ENCODE measurements at regions of chr18 and their contacts with region 1.

Region 1: GRCh38 chr18:57803103-57803969 is at the start of gene ATP8B1:
- DNase-seq: peak; percentile 84 to 87 (median 86)
- ATAC-seq: peak; percentile 88 to 95 (median 91)
- H3K4me3 ChIP-seq: peak within 1 kb of the TSS; percentile 78 to 97 (median 90)
- H3K27ac ChIP-seq: peak within 1 kb of the TSS; percentile 70 to 97 (median 92)
- H3K4me1 ChIP-seq: peaks cover 0 to 65% (median 26%) of the 10 kb centered on the region in 12 donors
- H3K27me3 ChIP-seq: peaks cover 0 to 46% (median 0%) of the 10 kb centered on the region in 9 donors
- CTCF ChIP-seq: no peak
- POLR2A ChIP-seq: peak in 1 of 2 donors; percentile 76
- total RNA-seq, gene ATP8B1: 5.3 to 12.8 (median 6.5) TPM

Region 2: DNA sequence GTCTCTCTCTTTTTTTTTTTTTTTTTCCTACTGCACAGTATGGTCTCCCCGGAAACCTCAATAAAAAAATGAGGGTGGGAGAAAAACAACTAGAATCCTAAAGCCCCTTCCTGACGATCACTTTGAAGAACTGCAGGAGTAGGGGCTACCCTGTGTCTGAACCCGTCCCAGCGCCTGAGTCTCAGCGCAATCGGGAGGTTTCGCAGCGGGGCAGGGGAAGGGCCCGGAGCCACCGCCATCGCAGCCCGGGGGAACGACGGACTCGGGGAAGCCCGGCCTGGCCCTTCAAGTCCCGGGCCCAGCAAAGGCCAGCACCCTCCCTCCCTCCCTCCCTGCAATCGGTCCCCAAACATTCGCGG is 182.1 kb before region 1 on chr18:
- intact Hi-C with region 1: loop called in 1 of 10 experiments (anchors 5 kb)
- DNase-seq: no peak
- ATAC-seq: peak; percentile 4 to 57 (median 49)
- H3K4me3 ChIP-seq: peak overlapping the region; percentile 60 to 93 (median 84)
- H3K27ac ChIP-seq: peak overlapping the region; percentile 58 to 96 (median 88)
- H3K4me1 ChIP-seq: peaks cover 0 to 38% (median 17%) of the 10 kb centered on the region in 12 donors
- H3K27me3 ChIP-seq: no peaks in the 10 kb centered on the region
- CTCF ChIP-seq: no peak
- POLR2A ChIP-seq: no peak

Region 3: GRCh38 chr18:57666818-57667497 is 136.4 kb before region 1 on chr18:
- intact Hi-C with region 1: loop called in 3 of 10 experiments (anchors 5 to 10 kb)
- DNase-seq: no peak
- ATAC-seq: peak in 2 of 4 donors; percentile 66 to 73
- H3K4me3 ChIP-seq: peak overlapping the region in 1 of 12 donors; percentile 13
- H3K27ac ChIP-seq: peak overlapping the region in 10 of 12 donors; percentile 23 to 74 (median 54)
- H3K4me1 ChIP-seq: peaks cover 0 to 41% (median 25%) of the 10 kb centered on the region in 12 donors
- H3K27me3 ChIP-seq: no peaks in the 10 kb centered on the region
- CTCF ChIP-seq: no peak
- POLR2A ChIP-seq: no peak

Region 4: GRCh38 chr18:57710226-57710625 is 93.1 kb before region 1 on chr18:
- intact Hi-C with region 1: loop called in 1 of 10 experiments (anchors 5 kb)
- DNase-seq: no peak
- ATAC-seq: no peak
- H3K4me3 ChIP-seq: no peak overlapping the region
- H3K27ac ChIP-seq: no peak overlapping the region
- H3K4me1 ChIP-seq: peaks cover 0 to 36% (median 13%) of the 10 kb centered on the region in 12 donors
- H3K27me3 ChIP-seq: no peaks in the 10 kb centered on the region
- CTCF ChIP-seq: no peak
- POLR2A ChIP-seq: no peak

Region 5: GRCh38 chr18:57768537-57769326 is 34.6 kb before region 1 on chr18:
- intact Hi-C with region 1: loop called in 1 of 10 experiments (anchors 5 kb)
- DNase-seq: no peak
- ATAC-seq: peak; percentile 41 to 73 (median 66)
- H3K4me3 ChIP-seq: no peak overlapping the region
- H3K27ac ChIP-seq: peak overlapping the region in 11 of 12 donors; percentile 33 to 82 (median 67)
- H3K4me1 ChIP-seq: peaks cover 7 to 65% (median 45%) of the 10 kb centered on the region in 12 donors
- H3K27me3 ChIP-seq: no peaks in the 10 kb centered on the region
- CTCF ChIP-seq: no peak
- POLR2A ChIP-seq: no peak

Region 6: DNA sequence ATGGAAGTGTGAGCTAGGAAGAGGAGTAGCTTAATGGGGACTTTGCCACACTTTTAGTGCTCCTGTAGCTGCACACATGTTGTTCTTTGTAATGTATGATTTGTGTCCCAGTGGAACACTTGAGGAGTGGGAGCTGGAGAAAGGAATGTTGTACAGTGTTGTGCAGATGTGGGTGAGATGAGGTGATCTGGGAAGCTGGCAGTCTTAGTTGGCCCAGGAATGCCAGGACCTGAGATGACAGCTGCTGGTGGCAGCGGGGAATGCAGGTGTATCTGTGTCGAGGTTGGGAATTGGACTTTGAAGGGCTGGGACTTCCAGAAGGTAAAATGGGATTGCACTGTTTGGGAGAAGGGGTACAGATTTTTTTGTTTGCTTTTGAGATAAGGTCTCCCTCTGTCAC is 264.3 kb after region 1 on chr18:
- intact Hi-C with region 1: no loop called
- DNase-seq: no peak
- ATAC-seq: no peak
- H3K4me3 ChIP-seq: no peak overlapping the region
- H3K27ac ChIP-seq: no peak overlapping the region
- H3K4me1 ChIP-seq: no peaks in the 10 kb centered on the region
- H3K27me3 ChIP-seq: no peaks in the 10 kb centered on the region
- CTCF ChIP-seq: no peak
- POLR2A ChIP-seq: no peak

Region 7: GRCh38 chr18:58525517-58525916 is 722.2 kb after region 1 on chr18:
- intact Hi-C with region 1: no loop called
- DNase-seq: no peak
- ATAC-seq: no peak
- H3K4me3 ChIP-seq: no peak overlapping the region
- H3K27ac ChIP-seq: no peak overlapping the region
- H3K4me1 ChIP-seq: no peaks in the 10 kb centered on the region
- H3K27me3 ChIP-seq: no peaks in the 10 kb centered on the region
- CTCF ChIP-seq: no peak
- POLR2A ChIP-seq: no peak